Heart right ventricle (tissue), 16 donors: ENCODE measurements at regions of chr17 and their contacts with region 1.

Region 1: DNA sequence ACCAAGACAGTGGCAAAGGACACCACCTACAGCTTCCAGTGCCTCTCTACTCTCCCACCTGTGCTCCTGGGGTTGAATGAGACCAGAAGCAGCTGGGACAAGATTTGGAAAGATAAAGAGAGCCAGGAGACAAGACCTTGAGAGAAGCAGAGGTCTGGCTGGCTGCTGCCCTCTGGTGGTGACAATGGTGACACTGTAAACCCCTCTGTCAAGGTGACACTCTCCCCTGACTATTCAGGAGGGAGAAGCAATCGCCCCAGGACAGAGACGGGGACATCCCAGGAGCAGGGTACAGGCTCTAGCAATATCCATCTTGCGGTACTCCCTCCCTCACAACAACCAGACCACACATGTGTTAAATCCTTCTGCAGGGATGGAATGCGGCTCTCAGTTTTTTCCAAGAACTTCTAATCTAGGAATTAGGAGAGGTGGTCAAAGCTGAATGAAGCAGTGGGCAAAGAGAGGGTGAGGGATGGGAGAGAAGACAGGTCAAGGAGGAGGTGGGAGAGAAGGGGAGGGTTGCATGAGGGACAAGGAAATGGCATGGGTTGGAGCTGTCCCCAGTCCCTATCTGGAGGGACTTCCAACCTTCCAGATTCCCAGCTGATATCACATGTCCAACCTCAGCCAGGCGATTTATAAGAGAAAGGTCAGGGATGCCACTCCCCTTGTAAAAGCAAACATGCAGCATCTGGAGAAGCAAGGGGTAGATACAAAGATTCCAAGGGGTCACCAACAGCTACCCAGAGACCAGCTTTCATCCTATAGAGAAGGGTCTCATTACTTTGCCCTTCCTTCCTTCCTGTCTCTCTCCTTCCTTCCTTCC is 2.9 kb downstream of the PHOSPHO1 start:
- DNase-seq: peak; percentile 74 to 77
- ATAC-seq: peak; percentile 24 to 51 (median 46)
- H3K4me3 ChIP-seq: no peak overlapping the region
- H3K27ac ChIP-seq: no peak overlapping the region
- H3K4me1 ChIP-seq: peaks cover 2 to 55% (median 36%) of the 10 kb centered on the region in 9 donors
- H3K27me3 ChIP-seq: peaks cover 0 to 60% (median 35%) of the 10 kb centered on the region in 7 donors
- CTCF ChIP-seq: peak; percentile 76 to 91 (median 84)

Region 2: DNA sequence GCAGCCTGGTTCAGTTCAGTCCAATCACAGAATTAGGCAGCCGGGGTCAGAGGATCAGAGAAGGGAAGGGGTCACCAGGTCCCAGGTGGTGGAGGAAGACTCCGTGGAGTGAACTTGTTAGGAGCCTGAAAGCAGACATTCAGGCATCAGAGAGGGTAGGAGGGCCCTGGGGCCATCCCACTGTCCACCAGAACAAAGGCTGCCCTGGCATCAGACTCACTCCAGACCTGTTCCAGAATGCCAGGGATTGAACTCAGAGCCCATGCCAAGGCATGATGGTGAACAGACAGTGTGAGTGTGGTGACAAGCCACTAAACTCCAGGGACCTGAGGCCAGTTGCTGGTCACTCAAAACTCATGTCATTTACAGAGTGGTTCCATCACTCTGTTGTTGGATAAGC is 57.4 kb before region 1 on chr17:
- intact Hi-C with region 1: loop called in 2 of 10 experiments (anchors 10 kb)
- DNase-seq: no peak
- ATAC-seq: no peak
- H3K4me3 ChIP-seq: no peak overlapping the region
- H3K27ac ChIP-seq: no peak overlapping the region
- H3K4me1 ChIP-seq: no peaks in the 10 kb centered on the region
- H3K27me3 ChIP-seq: peaks cover 0 to 70% (median 53%) of the 10 kb centered on the region in 7 donors
- CTCF ChIP-seq: no peak

Region 3: DNA sequence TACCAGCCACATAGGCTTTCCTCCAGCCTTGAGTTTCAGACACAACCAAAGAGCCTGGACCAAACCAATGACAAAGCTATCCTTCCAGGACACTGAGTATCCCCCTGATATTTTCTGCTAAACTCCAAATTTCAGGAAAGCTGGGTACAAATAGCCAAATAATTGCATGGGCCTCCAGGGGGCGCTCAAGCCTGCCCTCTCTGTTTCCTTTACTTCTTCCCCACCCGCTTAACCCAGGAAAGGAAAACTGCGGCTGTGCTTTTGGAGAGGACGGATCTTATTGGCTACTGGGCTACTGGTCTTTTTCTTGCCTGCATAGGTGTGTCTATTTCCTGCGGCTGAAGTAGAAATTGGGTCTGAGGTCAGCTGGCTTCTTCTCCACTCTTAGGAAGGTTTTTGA is 47.3 kb before region 1 on chr17:
- intact Hi-C with region 1: loop called in 8 of 10 experiments (anchors 2 to 10 kb)
- DNase-seq: peak; percentile 59 to 66
- ATAC-seq: peak in 6 of 8 donors; percentile 49 to 81 (median 62)
- H3K4me3 ChIP-seq: no peak overlapping the region
- H3K27ac ChIP-seq: no peak overlapping the region
- H3K4me1 ChIP-seq: peaks cover 0 to 4% (median 0%) of the 10 kb centered on the region in 9 donors
- H3K27me3 ChIP-seq: peaks cover 0 to 4% (median 0%) of the 10 kb centered on the region in 7 donors
- CTCF ChIP-seq: peak; percentile 57 to 84 (median 76)

Region 4: DNA sequence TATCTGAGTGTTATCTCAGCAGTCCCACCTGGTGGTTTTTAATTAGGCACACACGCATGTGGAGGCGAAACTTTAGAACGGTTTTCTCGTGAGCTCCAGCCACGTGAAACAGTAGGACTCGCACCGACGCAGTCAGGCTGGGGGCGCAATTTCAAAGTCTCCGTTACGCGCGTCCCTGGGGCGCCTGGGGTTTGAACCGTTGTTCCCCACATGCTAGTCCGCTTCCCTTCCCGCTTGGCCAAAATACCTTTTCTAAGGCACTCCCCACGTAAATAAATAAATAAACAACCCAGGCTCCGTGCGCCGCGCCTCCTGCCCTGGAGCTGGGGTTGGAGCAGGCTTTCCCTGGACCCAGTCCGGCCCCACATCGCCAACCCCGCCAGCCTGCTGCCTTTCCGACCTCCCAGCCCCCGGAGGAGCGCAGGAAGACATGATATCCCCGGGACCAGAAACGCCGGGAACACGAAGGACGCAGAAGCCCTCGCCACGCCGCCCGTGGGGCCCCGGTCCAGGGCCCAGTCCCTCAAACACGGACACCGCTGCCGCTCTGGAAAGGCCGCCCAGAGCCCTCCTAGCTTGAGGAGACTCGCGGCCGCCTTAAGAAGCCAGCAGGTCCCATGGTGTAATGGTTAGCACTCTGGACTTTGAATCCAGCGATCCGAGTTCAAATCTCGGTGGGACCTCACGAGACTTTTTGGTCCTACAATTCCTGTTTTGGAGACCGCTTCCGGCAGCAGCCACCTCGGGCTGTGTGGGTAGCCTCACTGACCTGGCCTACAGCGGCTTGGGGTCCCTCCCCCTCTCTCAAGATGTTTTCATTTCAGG is 35.5 kb before region 1 on chr17:
- intact Hi-C with region 1: loop called in 5 of 10 experiments (anchors 2 to 5 kb)
- DNase-seq: peak; percentile 90 to 92
- ATAC-seq: peak; percentile 88 to 95 (median 94)
- H3K4me3 ChIP-seq: peak overlapping the region; percentile 67 to 92 (median 74)
- H3K27ac ChIP-seq: peak overlapping the region; percentile 87 to 97 (median 92)
- H3K4me1 ChIP-seq: peaks cover 0 to 22% (median 10%) of the 10 kb centered on the region in 9 donors
- H3K27me3 ChIP-seq: no peaks in the 10 kb centered on the region
- CTCF ChIP-seq: peak in 5 of 9 donors; percentile 32 to 61 (median 60)

Region 5: GRCh38 chr17:49285716-49286115 is 58.1 kb after region 1 on chr17:
- intact Hi-C with region 1: loop called in 8 of 10 experiments (anchors 2 to 10 kb)
- DNase-seq: no peak
- ATAC-seq: no peak
- H3K4me3 ChIP-seq: no peak overlapping the region
- H3K27ac ChIP-seq: no peak overlapping the region
- H3K4me1 ChIP-seq: no peaks in the 10 kb centered on the region
- H3K27me3 ChIP-seq: no peaks in the 10 kb centered on the region
- CTCF ChIP-seq: no peak

Region 6: DNA sequence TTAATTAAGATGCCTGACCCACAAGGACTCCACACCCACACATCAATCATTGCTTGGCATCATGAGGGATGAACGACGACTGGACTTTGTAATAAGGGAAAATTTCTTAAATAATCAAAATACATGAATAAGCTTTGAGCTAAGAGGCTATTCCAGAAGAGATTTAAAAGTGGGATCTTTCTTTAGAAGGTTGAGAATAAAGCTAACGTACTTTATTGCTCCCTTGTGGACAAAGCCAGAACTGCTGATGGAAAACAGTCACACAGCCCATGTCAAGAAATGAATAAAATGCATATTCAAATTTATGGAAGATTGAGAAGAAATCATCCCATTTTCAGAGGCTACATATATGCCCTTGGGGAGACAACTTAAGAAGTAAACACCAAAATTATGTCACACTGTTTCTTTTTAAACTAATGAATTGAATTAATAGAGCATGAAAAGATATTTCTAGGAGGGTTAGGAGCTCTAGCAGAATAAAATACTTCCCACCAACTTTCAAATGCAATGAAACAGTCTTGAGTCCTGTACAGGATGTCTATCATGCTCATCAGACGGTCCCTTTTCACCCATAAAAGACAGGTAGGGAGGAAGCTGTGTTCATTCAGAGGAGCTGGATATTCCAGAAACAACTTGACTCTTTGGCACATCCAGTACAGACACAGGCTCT is 63.2 kb after region 1 on chr17:
- intact Hi-C with region 1: loop called in 8 of 10 experiments (anchors 2 to 10 kb)
- DNase-seq: peak in 1 of 2 donors; percentile 17
- ATAC-seq: peak in 1 of 8 donors; percentile 30
- H3K4me3 ChIP-seq: no peak overlapping the region
- H3K27ac ChIP-seq: no peak overlapping the region
- H3K4me1 ChIP-seq: no peaks in the 10 kb centered on the region
- H3K27me3 ChIP-seq: no peaks in the 10 kb centered on the region
- CTCF ChIP-seq: peak; percentile 53 to 82 (median 75)

Region 7: DNA sequence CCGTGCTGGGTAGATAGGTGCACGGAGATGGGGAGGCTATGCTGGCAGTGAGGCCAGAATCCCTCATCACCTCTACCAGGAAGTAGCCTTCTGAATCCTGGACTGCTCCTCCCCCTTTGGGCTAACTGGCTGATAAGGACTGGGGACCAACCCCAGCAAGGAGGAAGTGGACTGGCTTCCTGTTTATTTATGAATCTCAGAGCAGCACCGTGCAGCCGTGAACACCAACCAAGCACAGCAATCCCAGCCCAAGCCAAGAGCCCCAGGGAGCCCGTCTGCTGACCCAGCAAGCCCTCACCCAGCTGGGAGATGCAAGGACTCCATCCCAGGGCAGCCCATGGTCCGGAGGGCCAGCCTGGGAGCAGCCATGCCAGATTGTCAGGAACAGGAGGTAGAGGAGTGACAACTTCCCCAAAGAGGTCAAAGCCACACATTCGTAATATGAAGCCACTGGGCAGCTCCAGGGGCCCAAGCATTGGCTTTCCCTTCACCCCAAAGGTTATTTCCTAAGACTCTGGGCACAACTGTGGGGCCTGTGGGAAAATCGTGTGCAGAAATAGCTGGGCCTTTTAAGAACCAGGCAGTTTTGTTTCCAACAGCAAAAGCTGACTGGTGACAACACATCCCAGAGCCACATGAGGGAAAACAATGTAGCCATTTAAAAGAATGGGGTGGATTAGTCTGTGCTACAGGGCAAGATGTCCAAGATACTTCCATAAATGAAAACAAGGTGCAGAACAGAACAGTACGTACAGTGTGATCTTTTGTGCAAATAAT is 163.1 kb after region 1 on chr17:
- intact Hi-C with region 1: loop called in 1 of 10 experiments (anchors 10 kb)
- DNase-seq: no peak
- ATAC-seq: peak; percentile 39 to 76 (median 57)
- H3K4me3 ChIP-seq: peak overlapping the region in 2 of 10 donors; percentile 2 to 38
- H3K27ac ChIP-seq: peak overlapping the region in 5 of 10 donors; percentile 12 to 90 (median 58)
- H3K4me1 ChIP-seq: peaks cover 0 to 75% (median 8%) of the 10 kb centered on the region in 9 donors
- H3K27me3 ChIP-seq: no peaks in the 10 kb centered on the region
- CTCF ChIP-seq: no peak